ENCODE measurements at regions of chr12 and their contacts with region 1.

Region 1: DNA sequence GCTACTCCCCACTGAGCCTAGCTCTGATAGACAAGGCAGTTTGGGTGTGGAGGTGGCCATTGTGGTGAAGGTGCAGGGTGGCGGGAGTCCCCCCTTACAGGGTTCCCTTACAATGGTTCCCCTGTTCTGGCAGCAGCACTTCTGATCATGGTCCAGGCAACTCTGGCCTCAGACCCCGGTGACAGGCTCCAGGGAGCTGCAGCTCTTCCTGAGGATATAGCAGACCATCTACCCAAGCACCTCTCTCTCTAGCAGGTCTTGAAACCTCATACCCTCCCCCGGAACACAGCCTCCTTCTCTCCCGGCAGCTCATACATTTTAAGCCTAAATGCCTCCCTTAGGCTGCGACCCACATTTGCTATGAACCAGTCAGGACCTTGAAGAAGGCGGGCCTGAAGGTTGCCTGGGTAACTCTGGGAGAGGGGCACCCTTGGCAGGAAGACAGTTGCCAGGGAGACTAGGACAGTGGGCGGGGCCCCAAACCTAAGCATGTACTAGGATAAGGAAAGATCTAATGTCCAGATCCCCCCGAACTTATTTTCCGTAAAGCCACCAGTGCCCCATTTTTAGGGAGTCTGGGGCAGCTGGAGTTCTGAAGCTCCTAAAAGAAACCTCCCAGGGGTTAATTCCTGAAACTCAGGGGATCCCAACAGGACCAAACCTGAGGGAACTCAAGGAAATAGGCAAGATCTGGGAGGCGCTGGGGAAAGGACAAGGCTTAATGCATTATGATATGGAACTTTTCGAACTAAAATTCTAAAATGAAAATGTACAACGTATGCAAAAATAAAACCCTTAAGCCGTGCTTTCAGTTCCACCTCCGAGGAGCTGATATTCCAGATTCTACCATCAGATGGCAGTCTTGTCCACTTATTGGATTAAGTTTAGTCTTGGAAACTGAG is 4.5 kb upstream of the GDF11 start:
- DNase-seq: peak; percentile 89
- ATAC-seq: peak; percentile 81
- H3K4me3 ChIP-seq: peak overlapping the region; percentile 61 to 97 (median 89)
- H3K4me3 Mint-ChIP-seq: peak overlapping the region; percentile 89
- H3K27ac ChIP-seq: peak overlapping the region; percentile 70 to 84
- H3K27ac Mint-ChIP-seq: peak overlapping the region; percentile 91
- H3K4me1 ChIP-seq: peaks cover 15 to 20% of the 10 kb centered on the region in 2 donors
- H3K4me1 Mint-ChIP-seq: peaks cover 21% of the 10 kb centered on the region
- H3K27me3 ChIP-seq: no peaks in the 10 kb centered on the region
- H3K27me3 Mint-ChIP-seq: no peaks in the 10 kb centered on the region
- CTCF ChIP-seq: peak; percentile 91

Region 2: GRCh38 chr12:55659486-55660385 is 78.6 kb before region 1 on chr12:
- CTCF ChIA-PET with region 1: interaction called, 46 read pairs
- POLR2A ChIA-PET with region 1: no interaction called
- intact Hi-C with region 1: loop called (anchors 1 kb)
- DNase-seq: peak; percentile 57
- ATAC-seq: peak; percentile 56
- H3K4me3 ChIP-seq: no peak overlapping the region
- H3K4me3 Mint-ChIP-seq: no peak overlapping the region
- H3K27ac ChIP-seq: no peak overlapping the region
- H3K27ac Mint-ChIP-seq: no peak overlapping the region
- H3K4me1 ChIP-seq: no peaks in the 10 kb centered on the region
- H3K4me1 Mint-ChIP-seq: peaks cover 2% of the 10 kb centered on the region
- H3K27me3 ChIP-seq: no peaks in the 10 kb centered on the region
- H3K27me3 Mint-ChIP-seq: peaks cover 9% of the 10 kb centered on the region
- CTCF ChIP-seq: peak; percentile 54

Region 3: GRCh38 chr12:55682087-55682796 is 56.1 kb before region 1 on chr12:
- CTCF ChIA-PET with region 1: no interaction called
- POLR2A ChIA-PET with region 1: no interaction called
- intact Hi-C with region 1: no loop called
- DNase-seq: peak; percentile 43
- ATAC-seq: peak; percentile 45
- H3K4me3 ChIP-seq: peak overlapping the region in 3 of 5 experiments; percentile 35 to 42 (median 40)
- H3K4me3 Mint-ChIP-seq: peak overlapping the region; percentile 83
- H3K27ac ChIP-seq: peak overlapping the region in 1 of 2 donors; percentile 61
- H3K27ac Mint-ChIP-seq: peak overlapping the region; percentile 59
- H3K4me1 ChIP-seq: peaks cover 23 to 37% of the 10 kb centered on the region in 2 donors
- H3K4me1 Mint-ChIP-seq: peaks cover 33% of the 10 kb centered on the region
- H3K27me3 ChIP-seq: no peaks in the 10 kb centered on the region
- H3K27me3 Mint-ChIP-seq: no peaks in the 10 kb centered on the region
- CTCF ChIP-seq: no peak

Region 4: GRCh38 chr12:55757701-55758100 is 19.3 kb after region 1 on chr12:
- CTCF ChIA-PET with region 1: interaction called, 19 read pairs
- POLR2A ChIA-PET with region 1: no interaction called
- intact Hi-C with region 1: no loop called
- DNase-seq: no peak
- ATAC-seq: no peak
- H3K4me3 ChIP-seq: no peak overlapping the region
- H3K4me3 Mint-ChIP-seq: no peak overlapping the region
- H3K27ac ChIP-seq: no peak overlapping the region
- H3K27ac Mint-ChIP-seq: no peak overlapping the region
- H3K4me1 ChIP-seq: no peaks in the 10 kb centered on the region
- H3K4me1 Mint-ChIP-seq: no peaks in the 10 kb centered on the region
- H3K27me3 ChIP-seq: no peaks in the 10 kb centered on the region
- H3K27me3 Mint-ChIP-seq: no peaks in the 10 kb centered on the region
- CTCF ChIP-seq: no peak

Region 5: DNA sequence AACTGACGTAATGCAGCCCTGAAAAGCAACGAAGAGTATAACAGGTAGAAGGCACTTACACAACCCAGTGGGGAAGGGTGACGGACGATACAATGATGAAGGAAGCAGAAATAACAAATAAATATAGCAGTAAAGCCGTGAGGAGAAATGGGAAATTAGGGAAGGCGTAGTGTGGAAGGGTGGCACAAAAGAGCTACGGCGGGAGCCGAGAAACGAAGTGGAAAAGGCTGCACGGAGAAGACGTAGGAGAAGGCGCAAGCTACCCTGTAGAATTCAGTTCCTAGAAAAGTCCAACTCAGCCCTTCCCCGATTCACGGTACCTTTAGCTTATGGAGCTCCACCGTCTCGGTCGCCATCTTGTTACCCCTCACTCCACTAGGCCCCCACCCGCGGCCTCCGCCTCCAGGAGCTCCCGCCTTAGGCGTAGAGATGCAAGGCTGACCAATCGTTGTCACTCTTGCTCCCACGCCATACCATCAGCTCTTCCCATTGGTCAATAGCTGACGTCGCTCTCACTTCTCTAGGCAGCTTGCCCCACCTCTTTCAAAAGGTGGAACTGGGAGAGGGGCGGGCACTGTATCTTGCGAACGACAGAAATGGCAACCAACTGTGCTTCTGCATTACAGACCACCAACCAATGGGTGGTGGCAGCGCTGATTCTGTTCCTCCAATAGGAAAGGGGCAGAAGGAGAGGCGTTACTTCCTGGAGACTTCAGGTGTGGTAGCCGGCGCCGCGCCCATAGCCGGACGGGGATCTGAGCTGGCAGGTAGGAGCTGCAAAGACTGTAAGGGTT is 79.2 kb after region 1 on chr12 and contains the starts of genes ORMDL2 and SARNP:
- CTCF ChIA-PET with region 1: interaction called, 21 read pairs
- POLR2A ChIA-PET with region 1: interaction called, 6 read pairs
- intact Hi-C with region 1: loop called (anchors 2 kb)
- DNase-seq: peak; percentile 99
- ATAC-seq: peak; percentile 92
- H3K4me3 ChIP-seq: peak within 1 kb of the TSS; percentile 81 to 100 (median 94)
- H3K4me3 Mint-ChIP-seq: no peak within 1 kb of the TSS
- H3K27ac ChIP-seq: peak within 1 kb of the TSS; percentile 50 to 84
- H3K27ac Mint-ChIP-seq: no peak within 1 kb of the TSS
- H3K4me1 ChIP-seq: peaks cover 24 to 30% of the 10 kb centered on the region in 2 donors
- H3K4me1 Mint-ChIP-seq: peaks cover 30% of the 10 kb centered on the region
- H3K27me3 ChIP-seq: no peaks in the 10 kb centered on the region
- H3K27me3 Mint-ChIP-seq: no peaks in the 10 kb centered on the region
- CTCF ChIP-seq: no peak
- total RNA-seq, gene ORMDL2: 41.9 and 43.1 TPM in 2 replicates
- total RNA-seq, gene SARNP: 42.8 and 46.4 TPM in 2 replicates

Region 6: DNA sequence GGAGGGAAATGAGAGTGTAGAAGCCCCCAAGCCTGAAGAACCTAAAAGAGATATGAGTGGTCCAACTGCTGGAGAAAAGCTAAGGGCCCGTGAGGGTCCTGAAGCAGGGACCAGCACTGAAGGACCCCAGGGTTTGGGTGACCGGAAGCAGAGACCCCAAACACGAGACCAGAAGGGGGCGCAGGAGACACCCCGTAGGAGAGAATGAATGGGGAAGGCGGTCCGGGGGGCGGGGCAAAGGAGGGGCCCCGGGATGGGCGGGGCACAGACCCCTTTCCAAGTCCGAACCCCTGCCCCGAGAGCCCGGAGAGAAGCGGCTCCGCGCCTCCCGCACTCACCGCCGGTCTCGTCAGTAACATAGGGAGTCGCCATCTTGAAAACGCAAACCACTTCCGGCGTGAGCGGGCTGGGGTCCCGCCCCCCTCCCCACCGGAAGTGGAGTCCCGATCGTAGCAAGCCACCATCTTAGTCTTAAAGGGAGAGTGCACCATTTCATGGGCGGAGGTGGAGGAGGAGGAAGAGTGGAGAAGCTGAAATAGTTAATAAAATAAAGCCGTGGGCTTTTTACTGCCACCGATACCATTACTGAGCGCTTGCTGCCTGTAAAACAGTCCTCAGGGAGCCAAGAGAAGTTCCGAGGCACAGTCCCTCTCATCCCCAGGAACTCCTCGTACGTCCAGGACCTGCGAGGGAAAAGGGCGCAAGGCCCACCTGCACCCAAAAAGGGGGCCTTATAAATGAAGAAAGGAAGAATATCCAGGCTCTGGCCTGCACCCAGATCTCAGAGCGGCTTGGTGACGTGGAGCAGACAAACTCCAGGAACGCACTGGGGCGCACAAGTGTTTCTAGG is 188.6 kb after region 1 on chr12:
- CTCF ChIA-PET with region 1: interaction called, 49 read pairs
- POLR2A ChIA-PET with region 1: interaction called, 3 read pairs
- intact Hi-C with region 1: loop called (anchors 1 kb)
- DNase-seq: peak; percentile 94
- ATAC-seq: peak; percentile 50
- H3K4me3 ChIP-seq: peak overlapping the region; percentile 88 to 100 (median 98)
- H3K4me3 Mint-ChIP-seq: peak overlapping the region; percentile 94
- H3K27ac ChIP-seq: peak overlapping the region; percentile 67 to 92
- H3K27ac Mint-ChIP-seq: peak overlapping the region; percentile 97
- H3K4me1 ChIP-seq: peaks cover 33 to 45% of the 10 kb centered on the region in 2 donors
- H3K4me1 Mint-ChIP-seq: peaks cover 54% of the 10 kb centered on the region
- H3K27me3 ChIP-seq: no peaks in the 10 kb centered on the region
- H3K27me3 Mint-ChIP-seq: no peaks in the 10 kb centered on the region
- CTCF ChIP-seq: peak; percentile 87

Region 7: DNA sequence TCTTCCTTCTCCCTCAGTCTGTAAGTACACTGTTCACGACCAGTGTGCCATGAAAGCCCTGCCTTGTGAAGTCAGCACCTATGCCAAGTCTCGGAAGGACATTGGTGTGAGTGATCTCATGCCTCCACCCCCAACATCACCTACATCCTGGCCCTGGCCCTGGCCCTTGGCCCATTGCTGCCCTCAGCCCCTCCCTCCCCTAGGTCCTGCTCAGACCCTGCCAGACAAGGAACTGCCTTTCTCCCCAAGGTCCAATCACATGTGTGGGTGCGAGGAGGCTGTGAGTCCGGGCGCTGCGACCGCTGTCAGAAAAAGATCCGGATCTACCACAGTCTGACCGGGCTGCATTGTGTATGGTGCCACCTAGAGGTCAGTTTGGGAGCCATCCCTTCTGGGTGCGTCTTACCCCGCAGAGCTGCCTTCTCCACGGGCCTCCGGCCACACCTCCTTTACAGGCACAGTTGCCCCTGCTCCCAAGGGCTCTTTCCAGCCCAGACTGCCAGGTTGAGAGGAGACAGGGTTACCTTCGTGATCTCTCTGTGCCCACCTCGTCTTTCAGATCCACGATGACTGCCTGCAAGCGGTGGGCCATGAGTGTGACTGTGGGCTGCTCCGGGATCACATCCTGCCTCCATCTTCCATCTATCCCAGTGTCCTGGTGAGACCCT is 201.8 kb after region 1 on chr12:
- CTCF ChIA-PET with region 1: interaction called, 112 read pairs
- POLR2A ChIA-PET with region 1: no interaction called
- intact Hi-C with region 1: loop called (anchors 1 kb)
- DNase-seq: peak; percentile 89
- ATAC-seq: peak; percentile 99
- H3K4me3 ChIP-seq: no peak overlapping the region
- H3K4me3 Mint-ChIP-seq: peak overlapping the region; percentile 13
- H3K27ac ChIP-seq: peak overlapping the region; percentile 35 to 57
- H3K27ac Mint-ChIP-seq: peak overlapping the region; percentile 84
- H3K4me1 ChIP-seq: peaks cover 7 to 12% of the 10 kb centered on the region in 2 donors
- H3K4me1 Mint-ChIP-seq: peaks cover 19% of the 10 kb centered on the region
- H3K27me3 ChIP-seq: no peaks in the 10 kb centered on the region
- H3K27me3 Mint-ChIP-seq: no peaks in the 10 kb centered on the region
- CTCF ChIP-seq: peak; percentile 85

Region 8: GRCh38 chr12:56041552-56042429 is 303.4 kb after region 1 on chr12 and contains the start of gene RPS26:
- CTCF ChIA-PET with region 1: interaction called, 10 read pairs
- POLR2A ChIA-PET with region 1: no interaction called
- intact Hi-C with region 1: loop called (anchors 1 kb)
- DNase-seq: peak; percentile 99
- ATAC-seq: peak; percentile 93
- H3K4me3 ChIP-seq: peak within 1 kb of the TSS; percentile 70 to 99 (median 91)
- H3K4me3 Mint-ChIP-seq: peak within 1 kb of the TSS; percentile 98
- H3K27ac ChIP-seq: peak within 1 kb of the TSS; percentile 82 to 90
- H3K27ac Mint-ChIP-seq: peak within 1 kb of the TSS; percentile 97
- H3K4me1 ChIP-seq: peaks cover 19 to 21% of the 10 kb centered on the region in 2 donors
- H3K4me1 Mint-ChIP-seq: peaks cover 24% of the 10 kb centered on the region
- H3K27me3 ChIP-seq: no peaks in the 10 kb centered on the region
- H3K27me3 Mint-ChIP-seq: no peaks in the 10 kb centered on the region
- CTCF ChIP-seq: peak; percentile 67
- total RNA-seq, gene RPS26: 19.4 and 21.0 TPM in 2 replicates

Measured in B cell (primary cell).